MCF 10A (cell line): ENCODE measurements at regions of chr16 and their contacts with region 1.

Region 1: DNA sequence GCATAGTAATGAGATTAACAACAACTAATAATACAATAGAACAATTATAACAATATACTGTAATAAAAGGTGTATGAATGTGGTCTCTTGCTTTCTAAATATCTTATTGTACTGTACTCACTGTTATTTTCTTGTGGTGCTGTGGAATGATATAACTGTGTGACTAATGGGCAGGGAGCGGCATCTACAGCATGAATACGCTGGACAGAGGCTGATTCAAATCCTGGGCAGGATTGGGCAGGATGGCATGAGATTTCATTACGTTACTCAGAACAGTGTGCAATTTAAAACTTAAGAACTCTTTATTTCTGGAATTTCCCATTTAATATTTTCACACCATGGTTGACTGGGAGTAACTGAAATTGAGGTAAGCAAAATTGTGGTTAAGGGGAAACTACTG is 1239.8 kb upstream of the GOT2 start:
- DNase-seq: peak; percentile 40
- H3K4me3 Mint-ChIP-seq: no peak overlapping the region
- H3K27ac Mint-ChIP-seq: no peak overlapping the region
- H3K4me1 Mint-ChIP-seq: peaks cover 7% of the 10 kb centered on the region
- H3K27me3 Mint-ChIP-seq: no peaks in the 10 kb centered on the region
- CTCF ChIP-seq: no peak

Region 2: GRCh38 chr16:59411961-59412841 is 561.8 kb before region 1 on chr16:
- CTCF ChIA-PET with region 1: no interaction called
- POLR2A ChIA-PET with region 1: no interaction called
- intact Hi-C with region 1: loop called (anchors 5 kb)
- DNase-seq: peak; percentile 9
- H3K4me3 Mint-ChIP-seq: no peak overlapping the region
- H3K27ac Mint-ChIP-seq: no peak overlapping the region
- H3K4me1 Mint-ChIP-seq: no peaks in the 10 kb centered on the region
- H3K27me3 Mint-ChIP-seq: no peaks in the 10 kb centered on the region
- CTCF ChIP-seq: peak; percentile 68

Region 3: DNA sequence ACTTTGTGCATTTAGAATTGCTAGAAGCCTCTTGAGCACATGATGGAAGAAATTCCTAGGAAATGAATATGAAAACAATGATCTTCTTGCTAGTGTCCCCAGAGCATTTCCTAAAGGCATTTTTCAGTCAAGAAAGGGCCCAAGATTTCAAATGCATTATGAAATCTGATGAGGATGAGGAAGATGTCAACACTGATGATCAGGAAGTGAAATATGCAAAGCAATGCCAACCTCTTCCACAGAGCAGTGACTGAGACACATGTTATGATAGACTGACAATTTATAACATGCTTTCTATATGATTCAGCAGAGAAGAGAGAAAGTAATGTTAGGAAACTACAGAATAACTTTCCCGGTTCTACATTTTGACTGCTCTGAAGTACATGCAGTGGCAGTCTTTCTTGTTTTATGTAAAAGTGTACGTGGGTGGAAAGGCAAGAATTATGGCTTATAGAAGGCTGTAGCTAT is 380.7 kb before region 1 on chr16:
- CTCF ChIA-PET with region 1: interaction called, 4 read pairs
- POLR2A ChIA-PET with region 1: no interaction called
- intact Hi-C with region 1: loop called (anchors 5 kb)
- DNase-seq: peak; percentile 50
- H3K4me3 Mint-ChIP-seq: peak overlapping the region; percentile 55
- H3K27ac Mint-ChIP-seq: no peak overlapping the region
- H3K4me1 Mint-ChIP-seq: peaks cover 18% of the 10 kb centered on the region
- H3K27me3 Mint-ChIP-seq: no peaks in the 10 kb centered on the region
- CTCF ChIP-seq: no peak

Region 4: GRCh38 chr16:59959311-59959710 is 14.7 kb before region 1 on chr16:
- CTCF ChIA-PET with region 1: no interaction called
- POLR2A ChIA-PET with region 1: no interaction called
- intact Hi-C with region 1: no loop called
- DNase-seq: no peak
- H3K4me3 Mint-ChIP-seq: no peak overlapping the region
- H3K27ac Mint-ChIP-seq: no peak overlapping the region
- H3K4me1 Mint-ChIP-seq: no peaks in the 10 kb centered on the region
- H3K27me3 Mint-ChIP-seq: no peaks in the 10 kb centered on the region
- CTCF ChIP-seq: no peak

Region 5: DNA sequence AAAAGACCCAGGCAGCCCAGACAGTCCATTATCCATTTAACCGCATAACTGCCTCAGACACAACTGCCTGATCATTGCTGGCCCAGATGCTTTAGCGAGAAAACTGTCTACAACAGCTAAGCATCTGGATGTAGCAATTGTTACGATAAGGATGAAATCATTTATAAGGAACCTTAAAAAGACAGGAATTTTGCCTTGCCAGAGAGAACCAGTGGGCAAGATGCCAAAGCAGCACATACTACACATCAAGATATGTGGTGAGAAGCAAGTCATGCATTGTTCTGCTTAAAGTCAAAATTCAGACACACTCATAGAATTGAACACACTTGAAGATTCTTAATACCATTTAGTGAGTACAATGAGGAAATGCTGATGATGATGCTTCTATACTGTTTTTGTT is 537.0 kb after region 1 on chr16:
- CTCF ChIA-PET with region 1: no interaction called
- POLR2A ChIA-PET with region 1: no interaction called
- intact Hi-C with region 1: no loop called
- DNase-seq: no peak
- H3K4me3 Mint-ChIP-seq: no peak overlapping the region
- H3K27ac Mint-ChIP-seq: no peak overlapping the region
- H3K4me1 Mint-ChIP-seq: no peaks in the 10 kb centered on the region
- H3K27me3 Mint-ChIP-seq: no peaks in the 10 kb centered on the region
- CTCF ChIP-seq: no peak